Activated CD4-positive, alpha-beta T cell treated with anti-CD3 and anti-CD28 coated beads, Interleukin-2, amount 10 ng/mL, durations not matched to agents 24 days and 14 days (primary cell): ENCODE measurements at regions of chr10 and their contacts with region 1.

Region 1: DNA sequence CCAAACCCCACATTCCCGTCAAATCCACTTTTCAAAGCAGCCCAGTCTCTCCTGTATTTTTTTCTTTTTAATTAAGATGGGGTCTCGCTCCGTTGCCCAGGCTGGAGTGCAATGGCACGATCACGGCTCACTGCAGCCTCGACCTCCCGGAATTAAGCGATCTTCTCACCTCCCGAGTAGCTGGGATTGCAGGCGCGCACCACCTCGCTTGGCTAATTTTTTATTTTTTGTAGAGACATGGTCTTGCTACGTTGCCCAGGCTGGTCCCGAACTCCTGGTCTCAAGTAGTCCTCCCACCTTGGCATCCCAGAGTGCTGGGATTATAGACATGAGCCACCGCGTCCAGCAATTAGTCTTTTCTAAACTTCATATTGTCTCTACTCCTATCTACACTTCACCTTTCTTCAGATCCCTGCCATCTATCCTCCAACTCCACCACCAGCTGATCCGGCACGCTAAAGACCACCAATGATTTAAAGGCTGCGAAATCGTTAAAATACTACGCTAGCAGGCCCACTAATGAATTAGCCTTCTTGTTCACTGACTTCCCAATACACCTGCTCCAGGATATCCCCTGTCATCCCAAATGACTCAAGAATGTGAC is 525 bp upstream of the CHUK start:
- DNase-seq: no peak
- H3K4me3 Mint-ChIP-seq: peak overlapping the region; percentile 86
- H3K27ac Mint-ChIP-seq: peak overlapping the region; percentile 81
- H3K4me1 Mint-ChIP-seq: peaks cover 27% of the 10 kb centered on the region
- H3K27me3 Mint-ChIP-seq: no peaks in the 10 kb centered on the region

Region 2: GRCh38 chr10:99714446-99714845 is 515.5 kb before region 1 on chr10:
- intact Hi-C with region 1: no loop called
- DNase-seq: no peak
- H3K4me3 Mint-ChIP-seq: no peak overlapping the region
- H3K27ac Mint-ChIP-seq: no peak overlapping the region
- H3K4me1 Mint-ChIP-seq: peaks cover 6% of the 10 kb centered on the region
- H3K27me3 Mint-ChIP-seq: no peaks in the 10 kb centered on the region

Region 3: GRCh38 chr10:100174699-100175677 is 54.9 kb before region 1 on chr10:
- intact Hi-C with region 1: loop called (anchors 2 kb)
- DNase-seq: peak; percentile 56
- H3K4me3 Mint-ChIP-seq: peak overlapping the region; percentile 32
- H3K27ac Mint-ChIP-seq: peak overlapping the region; percentile 79
- H3K4me1 Mint-ChIP-seq: peaks cover 21% of the 10 kb centered on the region
- H3K27me3 Mint-ChIP-seq: no peaks in the 10 kb centered on the region

Region 4: DNA sequence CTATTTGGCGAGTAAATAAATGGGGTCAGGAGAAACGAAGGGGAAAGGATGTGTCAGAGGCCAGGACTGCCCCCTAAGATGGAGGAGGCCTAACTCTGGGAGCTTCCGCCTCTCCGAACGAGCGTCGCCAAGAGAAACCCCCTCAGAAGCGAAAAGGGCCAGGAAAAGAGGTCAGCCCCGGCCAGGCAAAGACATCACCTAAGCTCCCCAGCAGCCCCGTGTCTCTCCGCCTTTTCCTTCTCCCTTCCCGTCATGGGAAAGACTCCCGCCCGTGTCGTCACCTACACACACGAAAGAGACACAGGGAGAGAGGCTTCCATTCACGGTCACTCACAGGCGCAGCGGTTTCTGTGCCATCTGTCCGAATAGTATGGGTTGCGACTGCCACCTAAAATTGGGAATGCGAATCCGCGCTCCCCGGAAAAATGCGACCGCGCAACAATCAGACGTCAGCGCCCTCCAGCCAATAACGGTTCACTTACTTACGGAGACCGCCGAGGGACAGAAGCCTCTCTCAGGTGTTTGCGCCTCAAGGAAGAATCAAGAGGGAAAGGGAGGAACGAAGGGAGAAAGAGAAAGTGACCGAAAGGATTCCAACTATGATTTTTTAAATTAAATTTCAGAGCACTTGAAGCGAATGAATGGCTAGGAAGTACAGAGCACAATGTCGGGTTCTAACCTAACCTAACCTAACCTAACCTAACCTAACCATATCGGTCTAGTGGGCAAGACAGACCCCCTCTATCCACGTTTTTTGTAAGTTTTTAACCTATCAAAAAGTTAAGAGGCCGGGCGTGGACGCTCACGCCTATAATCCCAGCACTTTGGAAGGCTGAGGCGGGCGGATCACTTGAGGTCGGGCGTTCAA is 37.5 kb after region 1 on chr10 and contains the start of gene CWF19L1:
- intact Hi-C with region 1: loop called (anchors 2 kb)
- DNase-seq: peak; percentile 94
- H3K4me3 Mint-ChIP-seq: peak within 1 kb of the TSS; percentile 99
- H3K27ac Mint-ChIP-seq: peak within 1 kb of the TSS; percentile 98
- H3K4me1 Mint-ChIP-seq: peaks cover 15% of the 10 kb centered on the region
- H3K27me3 Mint-ChIP-seq: no peaks in the 10 kb centered on the region
- total RNA-seq, gene CWF19L1: 45.2 and 47.2 TPM in 2 replicates